ENCODE measurements at regions of chr17 and their contacts with region 1.

Region 1: GRCh38 chr17:66255112-66255511 is 25.9 kb upstream of the APOH start:
- DNase-seq: no peak
- H3K4me3 ChIP-seq: no peak overlapping the region
- H3K27ac ChIP-seq: no peak overlapping the region
- H3K4me1 ChIP-seq: peaks cover 0 to 6% (median 4%) of the 10 kb centered on the region in 3 donors
- H3K27me3 ChIP-seq: no peaks in the 10 kb centered on the region
- CTCF ChIP-seq: peak; percentile 28 to 82 (median 72)
- POLR2A ChIP-seq: no peak

Region 2: GRCh38 chr17:66567234-66568170 is 312.4 kb after region 1 on chr17:
- intact Hi-C with region 1: loop called (anchors 5 kb)
- DNase-seq: no peak
- H3K4me3 ChIP-seq: no peak overlapping the region
- H3K27ac ChIP-seq: no peak overlapping the region
- H3K4me1 ChIP-seq: peaks cover 0 to 9% (median 0%) of the 10 kb centered on the region in 3 donors
- H3K27me3 ChIP-seq: no peaks in the 10 kb centered on the region
- CTCF ChIP-seq: peak; percentile 49 to 88 (median 83)
- POLR2A ChIP-seq: no peak